ENCODE measurements at regions of chr4 and their contacts with region 1.

Region 1: GRCh38 chr4:74932816-74933561 is at the start of gene PARM1:
- DNase-seq: peak; percentile 93 to 97 (median 96)
- ATAC-seq: peak; percentile 97
- H3K4me3 ChIP-seq: peak within 1 kb of the TSS; percentile 70
- H3K27ac ChIP-seq: peak within 1 kb of the TSS; percentile 74
- H3K4me1 ChIP-seq: no peaks in the 10 kb centered on the region
- H3K27me3 ChIP-seq: no peaks in the 10 kb centered on the region
- total RNA-seq, gene PARM1: 77.2 to 158 (median 120) TPM

Region 2: DNA sequence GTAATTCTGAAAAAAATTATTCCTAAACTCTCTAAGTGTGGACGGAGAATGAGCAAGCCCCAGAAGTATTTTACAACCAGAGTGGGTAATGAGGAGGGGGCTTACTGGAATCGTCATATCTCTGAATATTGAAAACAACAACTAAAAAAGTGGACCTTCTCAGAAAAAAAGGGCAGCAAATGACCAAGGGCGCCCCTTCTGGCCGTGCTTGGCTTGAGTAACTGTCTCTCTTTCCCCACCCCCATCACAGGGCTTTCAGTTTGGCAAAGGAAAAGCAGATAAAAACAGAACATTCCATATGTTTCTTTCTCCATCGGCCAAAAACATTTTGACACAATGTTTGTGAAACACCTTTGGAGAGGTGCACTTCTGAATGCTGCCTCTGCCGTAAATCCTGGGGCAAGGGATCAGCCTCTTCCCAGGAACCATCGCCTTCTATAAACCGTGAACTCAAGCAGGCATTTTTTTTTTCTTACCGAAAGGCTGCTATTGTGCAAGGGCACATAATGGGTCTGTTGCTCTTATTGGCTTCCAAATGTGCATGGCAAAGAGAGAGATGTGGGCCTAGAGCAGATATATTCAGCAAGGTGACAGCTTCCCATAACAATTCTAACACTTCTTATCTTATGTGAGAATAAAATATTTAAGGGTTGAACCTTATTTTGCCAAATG is 115.4 kb after region 1 on chr4:
- intact Hi-C with region 1: loop called in 3 of 4 experiments (anchors 10 kb)
- DNase-seq: no peak
- ATAC-seq: no peak
- H3K4me3 ChIP-seq: no peak overlapping the region
- H3K27ac ChIP-seq: no peak overlapping the region
- H3K4me1 ChIP-seq: peaks cover 9% of the 10 kb centered on the region
- H3K27me3 ChIP-seq: no peaks in the 10 kb centered on the region

Region 3: GRCh38 chr4:75056277-75056676 is 123.3 kb after region 1 on chr4:
- intact Hi-C with region 1: loop called in 2 of 4 experiments (anchors 10 kb)
- DNase-seq: no peak
- ATAC-seq: peak in 1 of 2 donors; percentile 39
- H3K4me3 ChIP-seq: no peak overlapping the region
- H3K27ac ChIP-seq: no peak overlapping the region
- H3K4me1 ChIP-seq: peaks cover 7% of the 10 kb centered on the region
- H3K27me3 ChIP-seq: no peaks in the 10 kb centered on the region

Region 4: GRCh38 chr4:75118739-75119138 is 185.8 kb after region 1 on chr4:
- intact Hi-C with region 1: loop called in 2 of 4 experiments (anchors 5 kb)
- DNase-seq: no peak
- ATAC-seq: no peak
- H3K4me3 ChIP-seq: no peak overlapping the region
- H3K27ac ChIP-seq: no peak overlapping the region
- H3K4me1 ChIP-seq: no peaks in the 10 kb centered on the region
- H3K27me3 ChIP-seq: no peaks in the 10 kb centered on the region

Region 5: GRCh38 chr4:75289914-75290582 is 357.1 kb after region 1 on chr4:
- intact Hi-C with region 1: loop called in 1 of 4 experiments (anchors 5 kb)
- DNase-seq: no peak
- ATAC-seq: peak in 1 of 2 donors; percentile 36
- H3K4me3 ChIP-seq: no peak overlapping the region
- H3K27ac ChIP-seq: no peak overlapping the region
- H3K4me1 ChIP-seq: no peaks in the 10 kb centered on the region
- H3K27me3 ChIP-seq: no peaks in the 10 kb centered on the region

Region 6: DNA sequence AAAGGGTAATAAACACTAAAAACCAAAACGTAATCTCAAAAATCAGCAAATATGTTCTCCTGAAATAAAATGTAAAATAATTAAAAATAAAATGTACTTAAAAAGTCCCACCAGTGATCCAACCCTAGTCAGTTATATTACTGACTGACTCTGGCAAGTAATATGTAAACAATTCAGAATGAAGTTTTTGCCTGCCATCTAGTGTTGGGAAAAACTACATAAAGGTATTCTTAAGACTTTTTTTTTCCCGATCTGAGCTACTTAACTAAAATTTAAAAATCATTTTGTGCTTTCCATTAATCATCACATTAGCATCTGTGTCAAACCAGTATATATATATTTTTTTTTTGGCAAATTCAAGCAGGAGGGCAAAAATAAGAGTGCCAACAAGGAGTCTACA is 557.2 kb after region 1 on chr4:
- intact Hi-C with region 1: loop called in 2 of 4 experiments (anchors 10 kb)
- DNase-seq: no peak
- ATAC-seq: no peak
- H3K4me3 ChIP-seq: no peak overlapping the region
- H3K27ac ChIP-seq: no peak overlapping the region
- H3K4me1 ChIP-seq: no peaks in the 10 kb centered on the region
- H3K27me3 ChIP-seq: no peaks in the 10 kb centered on the region

Measured in right cardiac atrium (tissue), 5 donors.